Activated CD4-positive, alpha-beta memory T cell treated with anti-CD3 and anti-CD28 coated beads for 36 hours (primary cell): ENCODE measurements at regions of chr3 and their contacts with region 1.

Region 1: GRCh38 chr3:158790901-158791589 is 10.8 kb upstream of the MFSD1 start:
- DNase-seq: peak; percentile 23
- H3K4me3 Mint-ChIP-seq: peak overlapping the region; percentile 61
- H3K27ac Mint-ChIP-seq: no peak overlapping the region
- H3K4me1 Mint-ChIP-seq: peaks cover 3% of the 10 kb centered on the region
- H3K27me3 Mint-ChIP-seq: no peaks in the 10 kb centered on the region

Region 2: DNA sequence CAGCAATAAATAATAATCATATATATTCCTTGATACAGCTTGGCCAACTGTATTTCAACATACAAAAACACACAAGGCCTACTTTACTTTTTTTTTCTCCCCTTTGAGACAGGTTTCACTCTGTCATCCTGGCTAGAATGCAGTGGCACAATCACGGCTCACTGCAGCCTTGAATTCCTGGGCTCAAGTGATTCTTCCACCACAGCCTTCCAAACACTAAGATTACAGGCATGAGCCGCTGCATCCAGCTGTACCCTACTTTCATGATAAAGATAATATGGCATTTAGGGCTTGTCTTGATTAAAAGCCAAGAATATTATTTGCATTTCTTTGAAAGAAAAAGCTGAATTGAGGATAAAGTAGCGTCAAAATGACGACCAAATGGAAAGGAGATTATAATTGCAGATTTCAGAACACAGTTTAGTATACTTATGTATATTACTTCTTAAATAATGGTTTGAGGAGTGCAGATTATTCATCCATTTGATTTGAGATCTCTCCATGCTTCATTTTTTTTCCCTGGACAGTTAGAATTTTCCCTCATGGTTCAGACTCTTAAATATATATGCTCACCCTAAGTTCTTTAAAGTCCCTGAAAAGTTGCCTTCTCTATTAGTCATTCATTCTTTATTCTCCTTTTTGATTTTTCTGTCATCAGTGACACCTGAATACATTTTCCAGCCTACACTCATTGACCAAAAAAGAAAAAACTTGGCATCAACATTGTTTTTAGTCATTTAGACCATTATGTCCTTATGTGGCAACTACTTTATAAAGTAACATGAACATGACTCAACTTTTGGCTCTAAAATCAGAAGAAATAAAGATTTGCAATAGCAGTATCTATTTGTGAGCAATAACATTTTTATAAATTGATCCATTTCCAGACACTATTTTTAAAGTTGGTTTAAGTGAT is 268.6 kb before region 1 on chr3:
- CTCF ChIA-PET with region 1: no interaction called
- POLR2A ChIA-PET with region 1: no interaction called
- intact Hi-C with region 1: no loop called
- DNase-seq: no peak
- H3K4me3 Mint-ChIP-seq: no peak overlapping the region
- H3K27ac Mint-ChIP-seq: no peak overlapping the region
- H3K4me1 Mint-ChIP-seq: no peaks in the 10 kb centered on the region
- H3K27me3 Mint-ChIP-seq: no peaks in the 10 kb centered on the region

Region 3: GRCh38 chr3:158539414-158540014 is 251.5 kb before region 1 on chr3:
- CTCF ChIA-PET with region 1: interaction called, 9 read pairs
- POLR2A ChIA-PET with region 1: no interaction called
- intact Hi-C with region 1: loop called (anchors 1 kb)
- DNase-seq: peak; percentile 35
- H3K4me3 Mint-ChIP-seq: no peak overlapping the region
- H3K27ac Mint-ChIP-seq: no peak overlapping the region
- H3K4me1 Mint-ChIP-seq: no peaks in the 10 kb centered on the region
- H3K27me3 Mint-ChIP-seq: no peaks in the 10 kb centered on the region

Region 4: DNA sequence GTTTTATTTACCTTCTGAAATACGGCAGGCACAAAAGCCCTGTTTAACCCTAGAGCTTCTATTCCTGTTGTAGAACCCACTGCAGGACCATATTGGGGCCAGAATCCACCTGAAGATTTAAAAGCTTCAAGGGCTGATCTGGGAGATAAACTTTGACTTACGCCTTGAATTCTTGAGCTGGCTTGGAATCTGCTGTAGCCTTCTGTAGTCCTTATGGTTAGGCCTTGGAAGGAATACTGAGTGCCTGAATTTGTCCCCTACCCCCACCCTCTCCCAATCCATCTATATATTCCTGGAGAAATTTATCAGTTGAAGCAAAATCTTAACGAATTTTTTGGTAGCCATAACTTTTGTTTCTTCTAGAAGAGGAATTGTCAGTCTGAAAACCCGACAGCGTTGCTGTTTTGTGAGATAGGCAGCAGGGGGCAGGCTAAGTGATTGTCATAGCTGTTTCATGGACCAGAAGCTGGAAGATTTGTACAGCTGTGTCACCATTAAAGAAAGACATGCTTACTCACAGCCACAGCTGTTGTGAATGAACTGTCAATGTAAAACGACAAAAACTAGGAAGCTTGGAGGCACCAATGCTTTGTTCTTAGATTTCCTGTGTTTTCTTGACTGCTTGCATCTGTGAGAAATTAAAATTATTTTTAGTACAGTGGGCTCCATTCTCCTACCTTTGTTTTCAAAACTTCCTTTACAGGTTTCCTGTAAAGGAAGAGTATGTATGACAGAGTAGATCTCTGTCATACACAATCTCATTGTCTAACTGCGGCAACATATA is 131.4 kb before region 1 on chr3:
- CTCF ChIA-PET with region 1: interaction called, 61 read pairs
- POLR2A ChIA-PET with region 1: interaction called, 3 read pairs
- intact Hi-C with region 1: loop called (anchors 1 kb)
- DNase-seq: peak; percentile 72
- H3K4me3 Mint-ChIP-seq: no peak overlapping the region
- H3K27ac Mint-ChIP-seq: no peak overlapping the region
- H3K4me1 Mint-ChIP-seq: peaks cover 5% of the 10 kb centered on the region
- H3K27me3 Mint-ChIP-seq: no peaks in the 10 kb centered on the region

Region 5: GRCh38 chr3:158672293-158673176 is 118.5 kb before region 1 on chr3 and contains the start of gene LXN:
- CTCF ChIA-PET with region 1: interaction called, 6 read pairs
- POLR2A ChIA-PET with region 1: interaction called, 4 read pairs
- intact Hi-C with region 1: loop called (anchors 1 kb)
- DNase-seq: peak; percentile 90
- H3K4me3 Mint-ChIP-seq: peak within 1 kb of the TSS; percentile 90
- H3K27ac Mint-ChIP-seq: peak within 1 kb of the TSS; percentile 92
- H3K4me1 Mint-ChIP-seq: peaks cover 12% of the 10 kb centered on the region
- H3K27me3 Mint-ChIP-seq: no peaks in the 10 kb centered on the region
- total RNA-seq, gene LXN: 8.1 to 8.6 TPM

Region 6: GRCh38 chr3:158801696-158802408 is 10.8 kb after region 1 on chr3 and contains the start of gene MFSD1:
- CTCF ChIA-PET with region 1: interaction called, 32 read pairs
- POLR2A ChIA-PET with region 1: interaction called, 4 read pairs
- intact Hi-C with region 1: loop called (anchors 1 kb)
- DNase-seq: peak; percentile 95
- H3K4me3 Mint-ChIP-seq: peak within 1 kb of the TSS; percentile 86
- H3K27ac Mint-ChIP-seq: peak within 1 kb of the TSS; percentile 87
- H3K4me1 Mint-ChIP-seq: peaks cover 23% of the 10 kb centered on the region
- H3K27me3 Mint-ChIP-seq: no peaks in the 10 kb centered on the region
- total RNA-seq, gene MFSD1: 11.9 to 12.4 TPM